Activated CD4-positive, alpha-beta memory T cell treated with anti-CD3 and anti-CD28 coated beads for 36 hours (primary cell): ENCODE measurements at regions of chr20 and their contacts with region 1.

Region 1: DNA sequence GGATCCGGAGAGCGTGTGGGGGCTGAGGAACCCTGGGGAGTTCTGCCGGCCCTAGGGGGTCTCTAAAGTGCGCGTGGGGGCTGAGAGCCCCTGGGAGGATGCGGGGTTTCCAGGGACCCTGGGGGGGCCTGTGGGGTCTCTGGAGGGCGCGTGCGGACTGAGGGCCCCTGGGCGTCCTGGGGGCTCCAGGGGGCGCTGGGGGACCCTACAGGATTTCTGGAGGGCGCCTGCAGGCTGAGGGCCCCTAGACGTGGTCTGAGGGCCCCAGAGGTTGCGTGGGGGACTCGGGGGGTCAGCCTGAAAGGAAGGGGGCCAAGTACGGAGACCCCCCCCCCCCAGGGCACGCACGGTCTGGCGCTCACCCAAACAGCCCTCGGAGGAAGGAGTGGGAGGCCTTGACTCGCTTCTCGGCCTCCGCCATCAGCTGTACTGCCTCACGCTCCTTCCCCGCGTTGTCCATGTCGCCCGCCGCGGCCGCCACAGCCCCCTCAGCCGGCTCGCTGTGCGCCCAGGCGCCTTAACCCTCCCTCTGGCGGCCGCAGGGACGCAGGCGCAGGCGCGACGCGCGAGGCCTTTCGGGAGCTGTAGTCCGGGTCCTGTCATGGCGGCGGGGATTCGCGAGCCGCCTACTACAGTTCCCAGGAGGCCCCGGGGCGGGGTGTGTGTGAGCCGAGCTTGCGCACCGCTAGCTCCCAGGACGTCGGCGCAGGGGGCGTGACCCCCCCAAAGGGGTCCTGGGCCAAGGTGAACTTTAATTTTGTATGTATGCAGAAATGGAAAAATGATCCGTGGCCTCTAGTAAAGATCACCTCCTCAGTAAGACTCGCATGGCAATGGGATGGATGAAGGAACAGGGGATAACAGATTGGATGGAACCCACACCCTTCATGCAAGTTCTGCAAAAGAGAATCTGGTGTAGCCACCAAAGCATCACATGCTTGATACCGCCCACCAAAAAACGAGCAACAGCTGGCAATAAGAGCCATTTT is at the start of gene NAPB:
- DNase-seq: peak; percentile 95
- H3K4me3 Mint-ChIP-seq: peak within 1 kb of the TSS; percentile 80
- H3K27ac Mint-ChIP-seq: peak within 1 kb of the TSS; percentile 73
- H3K4me1 Mint-ChIP-seq: peaks cover 26% of the 10 kb centered on the region
- H3K27me3 Mint-ChIP-seq: peaks cover 7% of the 10 kb centered on the region
- total RNA-seq, gene NAPB: 7.3 to 7.6 TPM

Region 2: DNA sequence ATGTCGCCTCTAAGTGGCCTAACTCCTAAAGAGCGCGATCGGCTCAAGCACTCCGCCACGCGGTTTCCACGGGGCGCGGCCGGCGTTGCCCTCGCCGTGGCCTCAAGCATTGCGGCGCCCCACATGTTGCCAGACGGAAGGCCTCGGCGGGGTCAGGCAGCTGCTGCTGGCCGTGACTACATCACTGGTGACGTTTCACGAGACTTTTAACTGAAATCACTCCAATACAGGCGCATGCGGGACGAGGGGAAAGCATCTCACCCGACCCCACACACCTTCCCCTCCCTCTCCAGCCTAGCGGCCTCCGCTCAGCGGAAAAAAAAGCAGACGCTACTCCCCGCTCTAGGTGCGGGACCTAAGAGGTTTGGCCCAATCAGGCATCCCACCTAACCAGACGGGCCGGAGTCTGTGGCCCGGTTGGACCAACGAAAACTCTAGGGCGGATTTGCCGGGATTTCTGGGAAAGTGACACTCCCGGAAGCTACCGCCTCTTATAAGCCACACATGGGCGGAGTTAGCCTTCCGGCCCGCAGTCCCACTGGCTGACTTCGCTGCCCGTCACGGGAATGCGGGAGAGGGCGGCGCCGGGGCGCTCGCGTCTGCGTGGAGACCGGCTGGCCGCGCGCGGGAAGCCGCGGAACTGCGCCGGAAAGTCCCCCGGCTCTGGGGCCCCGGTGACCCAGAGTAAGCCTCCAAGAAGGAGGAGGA is 70.9 kb before region 1 on chr20 and contains the start of gene NXT1:
- CTCF ChIA-PET with region 1: interaction called, 32 read pairs
- POLR2A ChIA-PET with region 1: interaction called, 28 read pairs
- intact Hi-C with region 1: loop called (anchors 1 kb)
- DNase-seq: peak; percentile 97
- H3K4me3 Mint-ChIP-seq: peak within 1 kb of the TSS; percentile 88
- H3K27ac Mint-ChIP-seq: peak within 1 kb of the TSS; percentile 100
- H3K4me1 Mint-ChIP-seq: peaks cover 26% of the 10 kb centered on the region
- H3K27me3 Mint-ChIP-seq: no peaks in the 10 kb centered on the region
- total RNA-seq, gene NXT1: 39.0 to 39.3 TPM

Region 3: GRCh38 chr20:23366384-23366783 is 54.9 kb before region 1 on chr20:
- CTCF ChIA-PET with region 1: interaction called, 5 read pairs
- POLR2A ChIA-PET with region 1: interaction called, 6 read pairs
- intact Hi-C with region 1: loop called (anchors 1 kb)
- DNase-seq: no peak
- H3K4me3 Mint-ChIP-seq: no peak overlapping the region
- H3K27ac Mint-ChIP-seq: peak overlapping the region; percentile 81
- H3K4me1 Mint-ChIP-seq: peaks cover 50% of the 10 kb centered on the region
- H3K27me3 Mint-ChIP-seq: peaks cover 2% of the 10 kb centered on the region

Region 4: GRCh38 chr20:23441850-23442313 is 20.6 kb after region 1 on chr20:
- CTCF ChIA-PET with region 1: interaction called, 10 read pairs
- POLR2A ChIA-PET with region 1: no interaction called
- intact Hi-C with region 1: no loop called
- DNase-seq: peak; percentile 69
- H3K4me3 Mint-ChIP-seq: no peak overlapping the region
- H3K27ac Mint-ChIP-seq: no peak overlapping the region
- H3K4me1 Mint-ChIP-seq: no peaks in the 10 kb centered on the region
- H3K27me3 Mint-ChIP-seq: peaks cover 1% of the 10 kb centered on the region

Region 5: DNA sequence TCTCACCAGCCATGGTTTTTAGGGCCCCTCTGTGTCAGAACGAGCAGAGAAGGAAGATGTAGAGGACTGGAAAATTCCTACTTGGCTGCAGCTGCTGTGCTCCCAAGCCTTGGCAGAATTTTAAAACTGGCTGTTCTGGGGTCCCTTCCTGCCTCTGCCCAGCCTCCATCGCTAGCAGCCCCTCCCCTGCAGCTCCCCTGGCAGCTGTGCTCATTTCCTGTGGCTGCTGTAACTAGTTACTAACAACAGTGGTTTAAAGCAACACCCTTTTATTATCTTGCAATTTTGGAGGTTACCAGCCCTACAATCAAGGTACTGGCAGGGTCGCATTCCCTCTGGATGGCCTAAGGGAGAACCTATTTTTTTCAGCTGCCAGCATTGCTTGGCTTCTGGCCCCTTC is 35.2 kb after region 1 on chr20:
- CTCF ChIA-PET with region 1: no interaction called
- POLR2A ChIA-PET with region 1: no interaction called
- intact Hi-C with region 1: no loop called
- DNase-seq: no peak
- H3K4me3 Mint-ChIP-seq: no peak overlapping the region
- H3K27ac Mint-ChIP-seq: no peak overlapping the region
- H3K4me1 Mint-ChIP-seq: peaks cover 9% of the 10 kb centered on the region
- H3K27me3 Mint-ChIP-seq: peaks cover 7% of the 10 kb centered on the region